ENCODE measurements at regions of chr15 and their contacts with region 1.

Region 1: DNA sequence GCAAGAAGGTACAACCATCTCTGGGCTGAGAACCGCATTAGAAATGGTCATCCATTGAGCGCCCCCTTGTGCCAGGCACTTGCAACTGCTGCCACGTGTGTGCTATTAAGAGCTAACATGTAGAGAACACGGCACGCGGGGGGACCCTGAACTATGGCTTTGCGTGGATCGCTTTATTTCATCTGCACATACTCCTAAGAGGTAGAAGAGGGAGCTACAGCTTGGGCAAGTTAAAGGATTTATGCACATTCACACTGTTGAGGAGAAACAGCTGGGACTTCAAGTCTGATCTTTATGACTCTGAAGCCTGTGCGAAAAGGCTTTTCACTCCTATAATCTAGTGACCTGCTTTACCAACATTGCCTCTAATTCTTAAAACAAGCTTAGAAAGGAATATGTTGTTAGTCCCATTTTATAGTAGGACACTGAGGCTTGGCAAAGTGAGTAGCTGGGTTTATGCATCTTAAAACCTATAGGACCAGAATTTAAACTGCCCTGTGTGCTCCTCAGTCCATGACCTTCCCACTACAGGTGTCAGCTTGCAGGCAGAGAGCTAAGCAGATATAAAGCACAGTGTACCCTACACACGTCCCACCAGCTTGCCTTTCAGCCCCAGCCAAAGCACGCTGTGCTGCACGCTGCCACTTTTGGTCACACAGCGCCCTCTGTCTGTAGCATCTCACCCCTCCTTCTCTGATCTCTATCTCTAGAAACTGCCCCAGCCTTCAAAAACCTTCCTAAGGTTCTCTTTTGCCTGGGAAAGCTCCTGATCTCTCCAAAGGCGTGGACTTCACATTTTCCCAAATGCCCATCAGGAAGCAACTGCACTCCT is 57.8 kb downstream of the STARD5 start:
- DNase-seq: peak; percentile 90

Region 2: DNA sequence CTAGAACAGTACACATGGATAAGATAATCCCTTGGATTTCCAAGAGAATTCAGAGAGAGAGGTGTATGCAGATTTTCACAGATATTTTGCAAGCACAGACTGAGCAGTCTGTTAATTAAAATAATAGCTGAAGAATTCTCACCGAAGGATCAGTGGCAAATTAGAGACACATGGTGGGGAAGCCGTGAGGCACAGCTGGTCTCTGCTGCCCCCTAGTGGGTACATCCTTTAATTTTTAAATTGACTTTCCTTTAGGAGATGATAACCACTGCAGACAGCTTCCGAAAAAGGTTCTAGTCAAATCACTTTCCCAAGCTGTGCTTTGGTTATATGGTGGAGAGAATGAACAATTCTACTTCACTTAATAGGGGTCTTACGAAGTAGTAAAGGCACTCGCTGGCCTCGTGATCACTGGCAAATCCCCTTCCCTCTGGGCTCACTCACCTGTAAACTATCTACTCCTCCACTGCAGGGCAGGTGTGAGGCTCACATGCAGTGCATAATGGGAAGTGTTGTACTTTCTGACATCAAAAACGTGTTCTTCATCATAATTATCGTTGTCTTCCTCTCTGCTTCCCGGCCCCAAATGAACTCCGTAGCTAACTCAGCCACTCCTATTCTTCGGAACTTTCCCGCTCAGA is 296.0 kb before region 1 on chr15:
- intact Hi-C with region 1: loop called (anchors 10 kb)
- DNase-seq: no peak

Region 3: DNA sequence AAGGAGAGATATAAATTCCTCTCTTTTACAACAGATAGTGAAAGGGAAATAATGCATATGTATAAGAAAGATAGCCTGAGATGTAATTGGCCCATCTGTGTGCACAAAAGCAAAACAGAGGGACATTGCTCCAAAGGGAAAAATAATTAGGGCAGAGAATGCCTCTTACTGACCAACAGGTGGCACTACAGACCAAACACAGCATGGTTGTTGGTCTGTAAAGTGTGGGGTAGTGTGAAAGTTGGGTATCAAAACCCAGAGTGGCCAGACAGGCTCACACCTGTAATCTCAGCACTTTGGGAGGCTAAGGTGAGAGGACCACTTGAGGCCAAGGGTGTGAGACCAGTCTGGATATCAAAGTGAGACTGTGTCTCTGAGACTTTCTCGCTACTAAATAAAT is 269.9 kb before region 1 on chr15:
- intact Hi-C with region 1: loop called (anchors 5 kb)
- DNase-seq: no peak

Region 4: GRCh38 chr15:81106560-81106959 is 159.6 kb before region 1 on chr15:
- intact Hi-C with region 1: loop called (anchors 2 kb)
- DNase-seq: no peak

Region 5: DNA sequence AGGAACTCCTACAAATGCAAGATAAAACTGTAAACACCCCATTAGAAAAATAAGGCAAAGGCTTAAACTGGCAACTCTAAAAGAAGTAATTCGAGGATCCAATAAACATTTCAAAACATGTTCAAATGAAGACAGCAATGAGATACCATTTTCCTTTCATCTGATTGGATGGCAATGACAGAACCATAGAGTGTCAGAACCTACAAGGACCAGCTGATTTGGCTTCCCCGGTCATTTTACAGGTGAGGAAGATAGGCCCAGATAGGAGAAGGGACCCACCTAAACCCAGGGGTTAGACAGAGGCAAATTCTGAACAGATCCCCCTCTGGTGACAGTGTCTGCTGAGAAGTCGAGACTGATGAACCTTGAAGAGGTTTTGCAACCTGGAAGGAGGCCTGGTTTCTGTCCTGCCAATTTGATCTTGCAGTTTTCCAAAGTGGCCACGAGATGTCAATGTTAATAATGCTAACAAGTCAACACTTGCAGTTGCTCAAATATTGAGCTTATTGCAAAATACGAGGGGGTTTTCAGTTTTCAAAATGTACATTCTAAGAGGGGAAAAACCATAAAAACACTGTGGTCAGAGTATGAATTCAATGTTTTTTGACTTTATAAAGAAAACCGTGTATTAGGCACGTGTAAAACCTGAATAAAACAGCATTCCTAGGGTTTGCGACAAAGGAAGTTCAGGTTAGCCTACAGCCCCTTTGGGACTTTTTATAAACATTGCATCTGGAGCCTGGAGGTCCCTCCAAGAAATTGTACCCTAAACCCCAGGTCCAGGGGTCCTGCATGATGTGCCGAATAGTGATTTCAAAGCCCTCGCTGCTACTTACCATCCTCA is 110.6 kb before region 1 on chr15:
- intact Hi-C with region 1: loop called (anchors 2 kb)
- DNase-seq: no peak

Measured in cardiac septum (tissue), 1 donor.